ENCODE measurements at regions of chr5 and their contacts with region 1.

Region 1: DNA sequence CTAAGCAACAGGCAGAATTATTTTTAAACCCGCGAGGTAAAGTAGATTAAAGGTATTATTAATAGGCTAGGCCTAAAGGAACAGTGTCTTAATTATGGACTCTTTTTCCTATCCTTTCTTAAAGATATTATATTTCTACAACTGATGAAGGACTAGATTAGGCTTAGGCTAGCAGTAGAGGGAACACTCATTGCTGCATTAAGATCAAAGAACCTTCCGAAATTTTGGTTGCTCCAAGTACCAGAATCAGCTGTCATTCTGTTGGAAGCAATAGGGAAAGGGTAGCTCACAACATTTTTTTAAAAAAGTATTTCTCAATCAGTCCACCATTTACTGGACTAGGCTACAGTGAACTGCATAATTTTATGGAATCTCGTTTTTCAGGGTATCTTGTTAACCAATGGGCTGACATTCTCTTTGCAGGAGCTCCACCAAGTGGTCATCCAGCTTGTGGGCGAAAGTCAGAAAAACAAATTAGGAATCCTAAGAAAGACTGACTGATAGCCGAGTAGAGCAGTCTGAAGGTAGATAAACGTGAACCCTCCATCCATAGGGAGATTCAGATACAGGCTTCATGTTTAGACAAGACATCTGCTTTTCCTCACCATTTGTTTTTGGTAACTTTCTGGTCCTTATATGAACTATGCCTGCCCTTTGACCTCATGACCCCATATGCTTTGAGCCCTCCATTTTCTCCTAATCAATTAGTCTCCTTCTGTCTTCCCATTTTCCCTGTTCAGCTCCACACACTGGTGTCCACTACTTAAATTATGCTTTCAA is 103.6 kb upstream of the CHD1 start:
- DNase-seq: peak; percentile 83
- H3K27ac ChIP-seq: no peak overlapping the region
- CTCF ChIP-seq: peak; percentile 91

Region 2: GRCh38 chr5:98928873-98929696 is 103.3 kb before region 1 on chr5 and contains the start of gene CHD1:
- CTCF ChIA-PET with region 1: interaction called, 13 read pairs
- POLR2A ChIA-PET with region 1: no interaction called
- DNase-seq: peak; percentile 98
- H3K27ac ChIP-seq: peak within 1 kb of the TSS; percentile 100
- CTCF ChIP-seq: no peak